HCT116 (cell line): ENCODE measurements at regions of chr11 and their contacts with region 1.

Region 1: DNA sequence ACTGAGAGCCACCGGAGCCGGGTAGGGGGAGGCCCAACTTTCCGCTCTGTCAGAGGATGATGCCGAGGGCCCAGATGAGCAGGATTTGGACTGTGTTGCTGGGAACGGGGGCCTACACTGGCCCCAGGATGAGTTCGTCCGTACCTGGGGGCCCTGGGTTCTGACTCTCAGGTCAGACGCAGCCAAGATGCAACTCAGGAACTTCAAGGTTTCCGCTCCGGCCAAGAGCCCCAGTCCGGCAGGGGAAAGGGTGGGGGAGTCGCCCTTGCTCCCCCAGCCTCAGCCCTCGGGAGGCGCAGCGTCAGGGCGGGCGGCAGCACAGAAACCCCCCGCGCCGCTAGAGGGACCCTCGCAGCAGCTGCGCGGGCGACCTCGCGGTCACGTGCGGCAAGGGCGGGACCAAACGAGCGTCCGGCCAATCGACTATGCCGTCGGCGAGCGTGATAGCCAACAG is 241 bp upstream of the ARL2 start:
- DNase-seq: peak; percentile 80
- ATAC-seq: peak; percentile 84
- H3K4me3 ChIP-seq: peak overlapping the region; percentile 71 to 75
- H3K27ac ChIP-seq: peak overlapping the region; percentile 87
- H3K4me1 ChIP-seq: peaks cover 15 to 34% of the 10 kb centered on the region in 2 experiments
- H3K27me3 ChIP-seq: no peaks in the 10 kb centered on the region
- CTCF ChIP-seq: peak in 1 of 3 experiments; percentile 87; a peak in 1 of 6 replicates
- POLR2A ChIP-seq: no peak
- RAD21 ChIP-seq: no peak

Region 2: GRCh38 chr11:64996710-64997380 is 16.9 kb before region 1 on chr11 and contains the start of gene BATF2:
- CTCF ChIA-PET with region 1: interaction called, 21 read pairs
- POLR2A ChIA-PET with region 1: interaction called, 4 read pairs
- RAD21 ChIA-PET with region 1: interaction called in 1 of 2 experiments, 3 read pairs
- intact Hi-C with region 1: no loop called
- DNase-seq: peak; percentile 50
- ATAC-seq: peak; percentile 90
- H3K4me3 ChIP-seq: peak within 1 kb of the TSS; percentile 30 to 50
- H3K27ac ChIP-seq: peak within 1 kb of the TSS; percentile 34; the same call in 1 of the 2 replicates
- H3K4me1 ChIP-seq: peaks cover 13 to 40% of the 10 kb centered on the region in 2 experiments; a peak in 3 of 4 replicates
- H3K27me3 ChIP-seq: no peaks in the 10 kb centered on the region
- CTCF ChIP-seq: peak; percentile 51 to 85 (median 52)
- POLR2A ChIP-seq: no peak
- RAD21 ChIP-seq: peak; percentile 78
- total RNA-seq, gene BATF2: 2.1 TPM

Region 3: GRCh38 chr11:65078151-65078550 is 64.4 kb after region 1 on chr11:
- CTCF ChIA-PET with region 1: interaction called, 3 read pairs
- POLR2A ChIA-PET with region 1: no interaction called
- RAD21 ChIA-PET with region 1: no interaction called
- intact Hi-C with region 1: loop called (anchors 5 kb)
- DNase-seq: peak; percentile 29
- ATAC-seq: peak; percentile 88
- H3K4me3 ChIP-seq: no peak overlapping the region
- H3K27ac ChIP-seq: peak overlapping the region; percentile 39
- H3K4me1 ChIP-seq: peaks cover 5 to 24% of the 10 kb centered on the region in 2 experiments; a peak in 3 of 4 replicates
- H3K27me3 ChIP-seq: no peaks in the 10 kb centered on the region
- CTCF ChIP-seq: peak; percentile 52 to 83 (median 78); a peak in 5 of 6 replicates
- POLR2A ChIP-seq: no peak
- RAD21 ChIP-seq: peak; percentile 59

Region 4: DNA sequence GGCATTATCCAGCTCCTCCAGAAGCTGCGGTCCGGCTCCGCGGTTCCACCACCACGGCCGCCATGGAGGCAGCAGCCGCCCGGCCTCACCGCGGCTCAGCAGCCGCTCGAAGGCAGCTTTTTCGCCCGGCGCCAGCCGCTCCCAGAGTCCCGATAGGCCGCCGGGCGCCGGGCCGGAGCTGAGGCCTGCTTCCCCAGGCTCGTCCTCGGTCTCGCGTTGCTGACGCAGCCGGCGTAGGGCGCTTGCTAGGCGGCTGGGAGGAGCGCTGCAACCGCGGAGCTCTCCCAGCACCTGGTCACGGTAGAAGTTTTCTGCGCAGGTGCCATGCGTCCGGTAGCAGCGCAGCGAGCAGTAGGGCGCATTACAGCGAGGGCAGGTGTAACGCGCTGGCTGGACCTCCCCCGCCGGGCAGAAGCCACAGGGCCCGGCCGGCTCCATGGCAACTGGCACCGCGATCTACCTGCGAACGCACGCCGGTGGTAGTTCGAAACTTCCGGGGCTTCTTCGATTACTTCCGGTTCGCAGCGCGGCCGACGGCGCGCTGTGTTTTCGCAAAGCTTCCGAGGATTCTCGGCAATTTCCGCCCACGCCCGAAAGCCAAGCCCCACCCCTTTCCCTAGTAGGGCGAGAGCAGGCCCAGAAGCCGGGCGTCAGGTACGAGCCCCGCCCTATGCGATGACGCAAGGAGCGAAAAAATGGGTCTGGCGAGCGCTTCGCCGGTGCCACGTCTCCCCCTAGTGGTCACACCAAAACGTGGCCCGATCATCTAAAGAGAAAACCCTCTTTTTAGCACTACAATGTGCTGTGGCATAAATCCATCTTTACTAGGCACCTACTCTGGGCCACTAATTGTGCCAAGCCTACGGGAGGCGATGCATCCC is 103.7 kb after region 1 on chr11 and contains the start of gene ZNHIT2:
- CTCF ChIA-PET with region 1: interaction called, 4 read pairs
- POLR2A ChIA-PET with region 1: interaction called, 9 read pairs
- RAD21 ChIA-PET with region 1: interaction called in 1 of 2 experiments, 3 read pairs
- intact Hi-C with region 1: loop called (anchors 5 kb)
- DNase-seq: peak; percentile 98
- ATAC-seq: peak; percentile 70
- H3K4me3 ChIP-seq: peak within 1 kb of the TSS; percentile 88 to 90
- H3K27ac ChIP-seq: peak within 1 kb of the TSS; percentile 95
- H3K4me1 ChIP-seq: peaks cover 17 to 45% of the 10 kb centered on the region in 2 experiments; a peak in 3 of 4 replicates
- H3K27me3 ChIP-seq: no peaks in the 10 kb centered on the region
- CTCF ChIP-seq: peak in 2 of 3 experiments; percentile 83 to 93; a peak in 4 of 6 replicates
- POLR2A ChIP-seq: peak; percentile 87
- RAD21 ChIP-seq: no peak
- total RNA-seq, gene ZNHIT2: 18.8 TPM